ENCODE measurements at regions of chr16 and their contacts with region 1.

Region 1: DNA sequence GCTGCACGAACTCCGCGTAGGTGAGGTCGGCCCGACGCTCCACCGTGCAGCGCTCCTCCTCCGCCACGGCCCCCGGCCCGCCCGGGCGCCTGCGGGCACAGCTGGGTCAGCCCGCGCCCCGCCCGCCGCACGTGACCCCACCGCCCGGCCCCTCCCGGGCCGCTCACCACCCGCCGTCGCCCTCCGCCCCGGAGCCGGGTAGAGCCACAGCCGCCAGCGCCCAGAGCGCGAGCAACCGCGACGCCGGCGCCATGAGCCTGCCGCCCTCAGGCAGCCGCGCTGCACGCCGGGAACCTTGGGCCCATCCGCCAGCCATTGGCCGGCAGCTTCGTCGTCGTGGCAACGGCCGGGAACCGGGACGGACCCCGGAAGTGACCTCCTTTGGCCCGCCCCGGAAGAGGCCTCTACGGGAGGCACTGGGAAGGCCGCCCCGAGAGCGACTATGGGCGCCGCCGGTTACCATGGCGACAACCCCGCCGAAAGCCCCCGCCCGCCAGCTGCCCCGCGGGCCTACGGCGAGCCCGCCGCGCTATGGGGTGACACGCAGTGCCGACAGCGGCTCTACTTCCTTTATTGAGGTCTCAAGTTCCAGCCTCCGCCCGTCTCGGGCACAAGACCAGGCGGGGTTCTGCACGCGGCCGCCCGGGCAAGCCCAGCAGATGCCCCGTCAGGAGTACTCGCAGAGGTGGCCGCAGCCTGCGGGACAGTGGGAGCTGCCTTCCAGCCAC is at the start of gene JMJD8:
- DNase-seq: peak; percentile 96
- H3K4me3 ChIP-seq: peak within 1 kb of the TSS; percentile 55 to 86 (median 68)
- H3K27ac ChIP-seq: peak within 1 kb of the TSS; percentile 52
- H3K4me1 ChIP-seq: peaks cover 53% of the 10 kb centered on the region
- H3K27me3 ChIP-seq: no peaks in the 10 kb centered on the region
- CTCF ChIP-seq: no peak
- total RNA-seq, gene JMJD8: 21.2 to 32.4 TPM

Region 2: GRCh38 chr16:401468-402348 is 282.5 kb before region 1 on chr16 and contains the start of gene DECR2:
- CTCF ChIA-PET with region 1: no interaction called
- dilution Hi-C with region 1: no loop called
- in situ Hi-C with region 1: no loop called
- intact Hi-C with region 1: loop called (anchors 5 kb)
- DNase-seq: peak; percentile 79
- H3K4me3 ChIP-seq: peak within 1 kb of the TSS; percentile 77 to 88 (median 80)
- H3K27ac ChIP-seq: peak within 1 kb of the TSS; percentile 38
- H3K4me1 ChIP-seq: peaks cover 6% of the 10 kb centered on the region
- H3K27me3 ChIP-seq: no peaks in the 10 kb centered on the region
- CTCF ChIP-seq: peak; percentile 7 to 58
- total RNA-seq, gene DECR2: 19.2 to 26.6 TPM

Region 3: GRCh38 chr16:749001-749400 is 64.8 kb after region 1 on chr16:
- CTCF ChIA-PET with region 1: no interaction called
- dilution Hi-C with region 1: no loop called
- in situ Hi-C with region 1: no loop called
- intact Hi-C with region 1: no loop called
- DNase-seq: peak; percentile 54
- H3K4me3 ChIP-seq: no peak overlapping the region
- H3K27ac ChIP-seq: no peak overlapping the region
- H3K4me1 ChIP-seq: peaks cover 5% of the 10 kb centered on the region
- H3K27me3 ChIP-seq: no peaks in the 10 kb centered on the region
- CTCF ChIP-seq: no peak

Region 4: DNA sequence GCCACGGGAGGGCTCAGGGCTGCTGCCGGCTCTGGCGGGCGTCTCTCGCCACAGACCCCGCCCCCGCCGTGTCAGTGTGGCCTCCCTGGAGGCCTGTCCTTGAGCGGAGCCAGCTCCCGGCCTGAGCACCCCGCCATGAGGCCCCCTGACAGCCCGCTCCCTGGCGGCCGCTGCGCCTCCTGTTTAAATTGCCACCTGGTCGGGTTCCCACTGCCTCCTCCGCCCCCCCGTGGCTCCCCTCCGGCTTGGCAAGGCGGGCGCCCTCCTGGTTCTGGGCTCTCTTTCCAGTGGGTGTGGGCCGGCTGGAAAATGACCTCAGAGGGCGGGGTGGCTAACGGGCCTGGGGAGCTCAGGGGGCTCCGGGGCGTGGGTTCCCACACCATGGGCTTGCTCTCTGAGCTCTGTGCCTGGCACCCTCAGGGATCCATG is 346.3 kb after region 1 on chr16:
- CTCF ChIA-PET with region 1: no interaction called
- dilution Hi-C with region 1: no loop called
- in situ Hi-C with region 1: no loop called
- intact Hi-C with region 1: no loop called
- DNase-seq: no peak
- H3K4me3 ChIP-seq: no peak overlapping the region
- H3K27ac ChIP-seq: no peak overlapping the region
- H3K4me1 ChIP-seq: no peaks in the 10 kb centered on the region
- H3K27me3 ChIP-seq: peaks cover 8% of the 10 kb centered on the region
- CTCF ChIP-seq: no peak